CD8-positive, alpha-beta memory T cell (primary cell): ENCODE measurements at regions of chr10 and their contacts with region 1.

Region 1: GRCh38 chr10:42753126-42753506 is 29.5 kb upstream of the BMS1 start:
- DNase-seq: peak; percentile 43 to 64 (median 49)
- H3K4me3 ChIP-seq: peak overlapping the region; percentile 25
- H3K4me3 Mint-ChIP-seq: peak overlapping the region; percentile 76 to 93 (median 82)
- H3K27ac ChIP-seq: no peak overlapping the region
- H3K27ac Mint-ChIP-seq: no peak overlapping the region
- H3K4me1 ChIP-seq: peaks cover 5% of the 10 kb centered on the region
- H3K4me1 Mint-ChIP-seq: peaks cover 0 to 21% (median 3%) of the 10 kb centered on the region in 3 donors
- H3K27me3 ChIP-seq: peaks cover 32% of the 10 kb centered on the region
- H3K27me3 Mint-ChIP-seq: peaks cover 42 to 73% of the 10 kb centered on the region in 2 donors

Region 2: GRCh38 chr10:42732266-42732665 is 20.9 kb before region 1 on chr10:
- CTCF ChIA-PET with region 1: no interaction called
- POLR2A ChIA-PET with region 1: no interaction called
- DNase-seq: no peak
- H3K4me3 ChIP-seq: no peak overlapping the region
- H3K4me3 Mint-ChIP-seq: no peak overlapping the region
- H3K27ac ChIP-seq: no peak overlapping the region
- H3K27ac Mint-ChIP-seq: no peak overlapping the region
- H3K4me1 ChIP-seq: no peaks in the 10 kb centered on the region
- H3K4me1 Mint-ChIP-seq: no peaks in the 10 kb centered on the region
- H3K27me3 ChIP-seq: no peaks in the 10 kb centered on the region
- H3K27me3 Mint-ChIP-seq: peaks cover 7 to 32% of the 10 kb centered on the region in 2 donors

Region 3: DNA sequence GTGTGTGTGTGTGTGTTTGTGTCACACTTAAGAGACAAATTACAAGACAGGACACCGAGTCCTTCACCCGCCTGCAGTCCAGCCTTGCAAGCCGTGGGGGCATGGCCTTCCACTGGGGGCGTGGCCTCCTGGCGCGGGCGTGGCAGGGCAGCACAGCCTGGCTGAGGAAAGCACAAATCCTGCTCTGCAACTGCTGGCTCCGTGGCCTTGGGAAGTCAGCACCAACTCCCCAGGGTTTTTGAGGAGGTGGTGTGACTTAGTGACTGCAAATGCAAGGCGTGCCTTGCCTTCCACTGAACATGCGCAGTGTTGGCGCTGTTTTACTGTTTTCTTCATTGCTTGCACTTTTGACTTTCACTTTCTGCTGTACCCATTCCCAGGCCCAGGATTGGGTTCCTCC is 16.5 kb after region 1 on chr10:
- CTCF ChIA-PET with region 1: interaction called, 11 read pairs
- POLR2A ChIA-PET with region 1: no interaction called
- DNase-seq: no peak
- H3K4me3 ChIP-seq: no peak overlapping the region
- H3K4me3 Mint-ChIP-seq: no peak overlapping the region
- H3K27ac ChIP-seq: no peak overlapping the region
- H3K27ac Mint-ChIP-seq: no peak overlapping the region
- H3K4me1 ChIP-seq: no peaks in the 10 kb centered on the region
- H3K4me1 Mint-ChIP-seq: no peaks in the 10 kb centered on the region
- H3K27me3 ChIP-seq: no peaks in the 10 kb centered on the region
- H3K27me3 Mint-ChIP-seq: peaks cover 21 to 45% of the 10 kb centered on the region in 2 donors

Region 4: DNA sequence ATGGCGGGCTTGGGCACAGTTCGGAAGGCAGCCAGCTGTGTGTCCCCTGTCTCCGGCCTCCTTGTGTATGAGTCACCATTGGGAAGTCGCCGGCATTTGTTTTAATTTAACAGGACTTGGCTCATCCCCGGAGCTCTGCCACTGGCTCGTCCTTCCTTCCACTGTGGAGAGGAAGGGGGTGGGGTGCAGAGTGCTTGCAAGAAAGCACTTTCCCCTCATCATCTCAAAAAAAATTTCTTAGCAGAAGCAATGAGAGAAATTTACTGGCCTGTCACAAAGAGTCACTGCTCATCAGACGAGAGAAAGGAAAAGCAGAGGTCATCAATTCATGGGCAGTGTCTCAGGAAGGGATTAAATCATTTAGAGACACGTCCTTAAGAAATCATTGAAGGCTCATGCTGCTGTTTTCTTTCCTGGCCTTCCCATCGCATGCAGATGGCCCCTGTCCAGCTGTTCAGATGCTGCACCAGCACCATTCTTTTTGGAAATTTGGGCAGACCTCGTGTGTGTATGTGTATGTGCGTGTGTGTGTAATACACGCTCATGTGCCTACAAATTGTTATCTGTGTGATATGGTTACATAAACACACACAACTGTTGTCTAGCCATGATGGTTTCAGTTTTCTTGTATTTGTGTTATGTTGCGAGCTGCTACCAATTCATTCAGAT is 122.8 kb after region 1 on chr10:
- CTCF ChIA-PET with region 1: no interaction called
- POLR2A ChIA-PET with region 1: no interaction called
- DNase-seq: no peak
- H3K4me3 ChIP-seq: no peak overlapping the region
- H3K4me3 Mint-ChIP-seq: no peak overlapping the region
- H3K27ac ChIP-seq: no peak overlapping the region
- H3K27ac Mint-ChIP-seq: peak overlapping the region in 1 of 8 donors; percentile 38
- H3K4me1 ChIP-seq: no peaks in the 10 kb centered on the region
- H3K4me1 Mint-ChIP-seq: no peaks in the 10 kb centered on the region
- H3K27me3 ChIP-seq: no peaks in the 10 kb centered on the region
- H3K27me3 Mint-ChIP-seq: peaks cover 6 to 18% of the 10 kb centered on the region in 2 donors

Region 5: DNA sequence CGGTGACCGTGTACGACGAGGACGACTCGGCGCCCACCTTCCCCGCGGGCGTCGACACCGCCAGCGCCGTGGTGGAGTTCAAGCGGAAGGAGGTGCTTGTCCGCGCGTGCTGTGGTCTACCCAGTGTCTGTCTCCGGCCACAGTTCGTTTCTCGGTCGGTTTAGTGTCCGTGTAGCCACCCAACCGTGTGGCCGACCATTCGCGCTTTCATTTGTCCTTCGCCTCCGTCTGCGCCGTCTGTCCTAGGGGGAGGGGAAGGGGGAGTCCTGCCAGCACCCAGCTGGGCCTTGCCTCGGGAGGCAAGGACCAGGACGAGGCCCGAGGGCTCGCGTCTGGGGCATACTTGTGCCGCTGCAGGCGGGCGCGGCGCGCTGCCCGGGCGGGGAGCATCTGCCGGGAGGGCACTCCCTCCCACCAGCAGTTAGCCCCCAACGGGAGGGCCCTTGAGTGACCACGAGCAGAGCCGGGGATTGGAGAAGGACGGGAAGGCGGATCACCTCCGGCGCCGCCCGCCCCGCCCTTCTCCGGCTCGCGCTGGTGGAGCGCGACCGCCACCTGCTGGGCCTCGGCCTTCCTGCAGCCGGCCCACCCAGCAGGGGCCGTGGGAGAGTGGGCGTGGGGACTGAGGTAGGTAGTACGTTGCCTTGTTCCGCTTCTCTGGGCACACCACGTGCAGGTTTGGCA is 352.1 kb after region 1 on chr10:
- CTCF ChIA-PET with region 1: interaction called, 14 read pairs
- POLR2A ChIA-PET with region 1: no interaction called
- DNase-seq: peak; percentile 68 to 77 (median 71)
- H3K4me3 ChIP-seq: peak overlapping the region; percentile 81
- H3K4me3 Mint-ChIP-seq: peak overlapping the region in 6 of 7 donors; percentile 71 to 90 (median 76)
- H3K27ac ChIP-seq: no peak overlapping the region
- H3K27ac Mint-ChIP-seq: peak overlapping the region in 1 of 8 donors; percentile 8
- H3K4me1 ChIP-seq: peaks cover 4% of the 10 kb centered on the region
- H3K4me1 Mint-ChIP-seq: peaks cover 0 to 4% (median 4%) of the 10 kb centered on the region in 3 donors
- H3K27me3 ChIP-seq: peaks cover 1% of the 10 kb centered on the region
- H3K27me3 Mint-ChIP-seq: peaks cover 15 to 18% of the 10 kb centered on the region in 2 donors